Calu3 (cell line): ENCODE measurements at regions of chr10 and their contacts with region 1.

Region 1: DNA sequence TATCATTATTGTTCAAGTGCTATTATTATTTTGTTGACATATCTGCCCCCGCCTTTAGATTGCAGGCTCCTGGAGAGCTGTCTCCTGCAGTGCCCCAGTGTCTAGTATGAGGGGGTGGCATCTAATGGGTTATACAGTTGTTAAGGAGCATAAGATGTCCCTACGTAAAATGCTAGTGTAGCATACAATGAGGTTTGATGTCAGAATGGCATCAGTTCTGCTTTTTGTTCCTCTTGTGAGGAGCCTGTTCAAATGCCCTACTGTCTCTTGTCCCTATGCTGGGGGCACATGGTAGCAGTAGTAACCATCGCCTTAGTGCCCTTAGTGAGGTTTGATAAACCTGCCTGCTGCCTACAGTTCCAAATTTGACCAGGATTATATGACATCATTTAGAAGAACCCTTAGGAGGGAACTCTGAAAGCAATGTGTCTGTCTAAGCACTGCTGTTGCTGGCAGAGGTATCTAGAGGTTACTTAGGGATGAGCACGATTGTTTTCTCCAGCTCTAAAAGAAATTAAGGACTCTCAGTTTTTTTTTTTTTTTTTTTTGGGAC is 9.7 kb downstream of the CREM start:
- DNase-seq: no peak
- H3K4me3 Mint-ChIP-seq: no peak overlapping the region
- H3K27ac Mint-ChIP-seq: no peak overlapping the region
- H3K4me1 Mint-ChIP-seq: no peaks in the 10 kb centered on the region
- H3K27me3 Mint-ChIP-seq: no peaks in the 10 kb centered on the region
- CTCF ChIP-seq: no peak

Region 2: DNA sequence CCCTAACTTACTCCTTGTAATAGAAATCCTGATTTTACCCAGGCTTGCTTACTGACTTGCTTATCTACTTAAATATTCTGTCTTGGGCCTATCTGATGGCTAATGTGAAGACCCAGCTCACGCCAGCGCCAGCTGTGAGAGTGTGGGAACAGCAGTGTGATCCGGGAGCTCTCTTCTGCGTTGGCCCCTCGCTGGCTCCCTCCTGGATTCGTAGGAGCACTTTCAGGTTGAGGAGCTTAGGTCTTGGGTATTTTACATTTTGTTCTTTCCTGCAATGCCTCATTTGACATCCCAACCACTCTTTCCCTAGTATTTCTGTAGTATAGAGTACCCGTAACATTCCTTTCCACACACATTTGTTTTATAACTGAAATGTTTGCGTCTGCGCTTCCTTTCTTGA is 42.0 kb after region 1 on chr10:
- CTCF ChIA-PET with region 1: no interaction called
- intact Hi-C with region 1: loop called (anchors 5 kb)
- DNase-seq: no peak
- H3K4me3 Mint-ChIP-seq: no peak overlapping the region
- H3K27ac Mint-ChIP-seq: no peak overlapping the region
- H3K4me1 Mint-ChIP-seq: no peaks in the 10 kb centered on the region
- H3K27me3 Mint-ChIP-seq: no peaks in the 10 kb centered on the region
- CTCF ChIP-seq: no peak